ENCODE measurements at regions of chr2 and their contacts with region 1.

Region 1: DNA sequence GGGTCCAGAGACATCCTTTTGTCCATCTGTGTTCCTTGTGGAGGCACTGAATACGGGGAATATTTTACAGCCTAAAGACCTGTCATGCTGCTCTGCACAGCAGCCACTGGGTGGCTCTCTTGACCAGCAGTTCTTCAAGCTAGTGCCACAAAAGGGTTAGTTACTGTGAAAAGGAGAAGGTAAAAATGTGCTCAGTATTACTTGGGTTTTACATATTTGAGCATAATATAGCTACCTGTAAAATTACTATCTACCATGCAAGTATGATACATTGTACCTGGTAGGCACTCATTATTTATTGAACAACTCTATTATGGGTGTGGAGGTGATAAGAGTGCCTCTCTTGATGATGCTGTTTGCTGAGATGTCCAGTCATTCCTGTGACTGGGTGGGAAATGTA is 23.6 kb downstream of the FZD5 start:
- DNase-seq: no peak
- H3K4me3 ChIP-seq: no peak overlapping the region
- H3K27ac ChIP-seq: no peak overlapping the region
- H3K4me1 ChIP-seq: no peaks in the 10 kb centered on the region
- H3K27me3 ChIP-seq: no peaks in the 10 kb centered on the region
- CTCF ChIP-seq: peak; percentile 49 to 89 (median 81)
- POLR2A ChIP-seq: no peak

Region 2: GRCh38 chr2:207974216-207974605 is 228.1 kb after region 1 on chr2:
- intact Hi-C with region 1: loop called (anchors 10 kb)
- DNase-seq: no peak
- H3K4me3 ChIP-seq: no peak overlapping the region
- H3K27ac ChIP-seq: no peak overlapping the region
- H3K4me1 ChIP-seq: peaks cover 0 to 14% (median 0%) of the 10 kb centered on the region in 3 donors
- H3K27me3 ChIP-seq: no peaks in the 10 kb centered on the region
- CTCF ChIP-seq: no peak
- POLR2A ChIP-seq: no peak

Region 3: DNA sequence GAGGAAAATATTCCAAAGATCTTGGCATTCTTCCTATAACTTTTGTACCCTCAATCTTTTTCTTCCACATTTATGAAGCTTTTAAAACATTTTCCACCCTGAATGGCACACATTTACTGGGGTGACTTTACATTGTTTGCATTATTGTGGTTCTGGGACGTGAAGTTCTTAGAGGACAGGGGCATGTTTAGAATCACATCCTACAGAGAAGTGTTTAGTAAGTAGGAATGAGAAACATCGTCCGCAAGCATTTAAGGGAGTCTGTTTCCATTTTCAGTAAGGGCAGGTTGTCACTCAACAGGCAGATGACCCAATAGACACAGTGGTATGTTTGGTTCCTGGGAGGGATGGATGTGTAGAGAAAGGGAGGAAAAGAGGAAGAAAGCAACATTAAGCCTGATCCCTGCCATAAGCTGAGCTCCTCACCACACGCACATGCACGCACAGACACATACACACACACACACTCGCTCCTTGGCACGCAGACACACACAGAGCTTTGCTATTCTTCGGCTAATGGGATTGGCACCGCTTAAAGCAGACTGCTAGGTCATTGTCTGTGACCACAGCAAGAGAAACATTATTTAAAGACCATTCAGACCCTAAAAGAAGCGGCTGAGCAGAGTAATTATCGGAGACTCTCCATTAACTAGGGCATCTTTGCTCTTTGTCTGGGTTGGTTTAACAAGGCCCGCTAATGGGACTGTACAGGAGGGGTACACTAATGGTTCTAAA is 293.4 kb after region 1 on chr2:
- intact Hi-C with region 1: loop called (anchors 5 kb)
- DNase-seq: no peak
- H3K4me3 ChIP-seq: no peak overlapping the region
- H3K27ac ChIP-seq: no peak overlapping the region
- H3K4me1 ChIP-seq: no peaks in the 10 kb centered on the region
- H3K27me3 ChIP-seq: no peaks in the 10 kb centered on the region
- CTCF ChIP-seq: no peak
- POLR2A ChIP-seq: no peak

Region 4: GRCh38 chr2:208072250-208072892 is 326.2 kb after region 1 on chr2:
- intact Hi-C with region 1: loop called (anchors 10 kb)
- DNase-seq: no peak
- H3K4me3 ChIP-seq: no peak overlapping the region
- H3K27ac ChIP-seq: no peak overlapping the region
- H3K4me1 ChIP-seq: no peaks in the 10 kb centered on the region
- H3K27me3 ChIP-seq: peaks cover 0 to 16% (median 0%) of the 10 kb centered on the region in 4 donors
- CTCF ChIP-seq: peak; percentile 32 to 75 (median 67)
- POLR2A ChIP-seq: no peak

Measured in esophagus squamous epithelium (tissue), 5 donors.